K562 (cell line): ENCODE measurements at regions of chr12 and their contacts with region 1.

Region 1: GRCh38 chr12:69290545-69291277 is 51.3 kb downstream of the CPSF6 start:
- DNase-seq: peak; percentile 76 to 91 (median 78)
- ATAC-seq: peak; percentile 100
- H3K4me3 ChIP-seq: no peak overlapping the region
- H3K27ac ChIP-seq: no peak overlapping the region
- H3K4me1 ChIP-seq: no peaks in the 10 kb centered on the region; a peak in 1 of 5 replicates
- H3K27me3 ChIP-seq: no peaks in the 10 kb centered on the region
- CTCF ChIP-seq: peak; percentile 99 to 100 (median 99)
- EP300 ChIP-seq: no peak
- POLR2A ChIP-seq: no peak
- RAD21 ChIP-seq: peak; percentile 98 to 99

Region 2: DNA sequence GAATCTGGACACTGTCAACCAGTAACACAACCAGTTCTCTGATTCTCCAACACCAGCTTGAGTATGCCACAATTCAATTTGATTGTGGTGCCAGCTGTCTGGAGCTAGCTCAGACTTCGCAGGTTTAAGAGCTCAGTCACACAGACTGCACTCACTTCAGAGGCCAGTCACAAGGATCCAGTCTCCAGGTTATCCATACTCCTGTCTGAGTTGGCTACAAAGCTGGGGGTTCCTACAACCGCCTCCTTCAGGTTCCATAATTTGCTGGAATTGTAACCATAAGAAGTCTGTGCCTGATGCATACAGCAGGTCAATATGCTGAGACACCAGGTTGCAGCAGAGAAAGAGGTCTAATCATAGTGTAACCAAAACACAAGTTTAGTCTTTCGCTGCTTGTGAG is 121.9 kb before region 1 on chr12:
- CTCF ChIA-PET with region 1: no interaction called
- POLR2A ChIA-PET with region 1: no interaction called
- in situ Hi-C with region 1: no loop called
- intact Hi-C with region 1: no loop called
- DNase-seq: no peak
- ATAC-seq: no peak
- H3K4me3 ChIP-seq: no peak overlapping the region
- H3K27ac ChIP-seq: no peak overlapping the region
- H3K4me1 ChIP-seq: no peaks in the 10 kb centered on the region; a peak in 1 of 5 replicates
- H3K27me3 ChIP-seq: peaks cover 5% of the 10 kb centered on the region in 2 experiments; a peak in 3 of 5 replicates
- CTCF ChIP-seq: no peak
- EP300 ChIP-seq: no peak
- POLR2A ChIP-seq: no peak
- RAD21 ChIP-seq: no peak

Region 3: GRCh38 chr12:69330475-69331473 is 40.1 kb after region 1 on chr12:
- CTCF ChIA-PET with region 1: no interaction called
- POLR2A ChIA-PET with region 1: no interaction called
- in situ Hi-C with region 1: no loop called
- intact Hi-C with region 1: no loop called
- DNase-seq: peak; percentile 42 to 73 (median 50)
- ATAC-seq: peak; percentile 82
- H3K4me3 ChIP-seq: peak overlapping the region; percentile 30
- H3K27ac ChIP-seq: peak overlapping the region; percentile 52; the same call in 2 of the 3 replicates
- H3K4me1 ChIP-seq: peaks cover 0 to 14% of the 10 kb centered on the region in 2 experiments
- H3K27me3 ChIP-seq: no peaks in the 10 kb centered on the region
- CTCF ChIP-seq: no peak
- EP300 ChIP-seq: no peak; the same call in 1 of the 2 replicates
- POLR2A ChIP-seq: peak; percentile 75
- RAD21 ChIP-seq: no peak

Region 4: DNA sequence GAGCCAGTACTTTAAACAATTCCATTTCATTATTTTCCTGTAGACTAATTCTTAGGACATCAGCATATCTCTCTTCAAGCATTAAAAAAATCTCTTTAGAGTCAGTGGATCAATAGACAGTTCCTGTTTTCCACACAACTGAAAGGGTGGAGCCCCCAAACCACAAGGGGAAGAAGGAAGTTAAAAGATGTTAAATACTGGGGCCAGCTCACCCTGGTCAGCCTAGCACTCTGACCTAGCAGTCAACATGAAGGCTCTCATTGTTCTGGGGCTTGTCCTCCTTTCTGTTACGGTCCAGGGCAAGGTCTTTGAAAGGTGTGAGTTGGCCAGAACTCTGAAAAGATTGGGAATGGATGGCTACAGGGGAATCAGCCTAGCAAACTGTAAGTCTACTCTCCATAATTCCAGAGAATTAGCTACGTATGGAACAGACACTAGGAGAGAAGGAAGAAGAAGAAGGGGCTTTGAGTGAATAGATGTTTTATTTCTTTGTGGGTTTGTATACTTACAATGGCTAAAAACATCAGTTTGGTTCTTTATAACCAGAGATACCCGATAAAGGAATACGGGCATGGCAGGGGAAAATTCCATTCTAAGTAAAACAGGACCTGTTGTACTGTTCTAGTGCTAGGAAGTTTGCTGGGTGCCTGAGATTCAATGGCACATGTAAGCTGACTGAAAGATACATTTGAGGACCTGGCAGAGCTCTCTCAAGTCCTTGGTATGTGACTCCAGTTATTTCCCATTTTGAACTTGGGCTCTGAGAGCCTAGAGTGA is 57.6 kb after region 1 on chr12 and contains the start of gene LYZ:
- CTCF ChIA-PET with region 1: interaction called, 4 read pairs
- POLR2A ChIA-PET with region 1: no interaction called
- in situ Hi-C with region 1: no loop called
- intact Hi-C with region 1: loop called (anchors 2 kb)
- DNase-seq: peak in 2 of 4 experiments; percentile 46 to 63
- ATAC-seq: peak; percentile 90
- H3K4me3 ChIP-seq: peak within 1 kb of the TSS; percentile 20
- H3K27ac ChIP-seq: peak within 1 kb of the TSS; percentile 63
- H3K4me1 ChIP-seq: peaks cover 4 to 10% of the 10 kb centered on the region in 2 experiments; a peak in 4 of 5 replicates
- H3K27me3 ChIP-seq: no peaks in the 10 kb centered on the region
- CTCF ChIP-seq: no peak
- EP300 ChIP-seq: 0 out of 2 replicates have a peak, but pooled peaks have one; percentile 7
- POLR2A ChIP-seq: 0 out of 2 replicates have a peak, but pooled peaks have one; percentile 30
- RAD21 ChIP-seq: no peak
- polyA plus RNA-seq, gene LYZ: 44.0 to 47.0 TPM

Region 5: DNA sequence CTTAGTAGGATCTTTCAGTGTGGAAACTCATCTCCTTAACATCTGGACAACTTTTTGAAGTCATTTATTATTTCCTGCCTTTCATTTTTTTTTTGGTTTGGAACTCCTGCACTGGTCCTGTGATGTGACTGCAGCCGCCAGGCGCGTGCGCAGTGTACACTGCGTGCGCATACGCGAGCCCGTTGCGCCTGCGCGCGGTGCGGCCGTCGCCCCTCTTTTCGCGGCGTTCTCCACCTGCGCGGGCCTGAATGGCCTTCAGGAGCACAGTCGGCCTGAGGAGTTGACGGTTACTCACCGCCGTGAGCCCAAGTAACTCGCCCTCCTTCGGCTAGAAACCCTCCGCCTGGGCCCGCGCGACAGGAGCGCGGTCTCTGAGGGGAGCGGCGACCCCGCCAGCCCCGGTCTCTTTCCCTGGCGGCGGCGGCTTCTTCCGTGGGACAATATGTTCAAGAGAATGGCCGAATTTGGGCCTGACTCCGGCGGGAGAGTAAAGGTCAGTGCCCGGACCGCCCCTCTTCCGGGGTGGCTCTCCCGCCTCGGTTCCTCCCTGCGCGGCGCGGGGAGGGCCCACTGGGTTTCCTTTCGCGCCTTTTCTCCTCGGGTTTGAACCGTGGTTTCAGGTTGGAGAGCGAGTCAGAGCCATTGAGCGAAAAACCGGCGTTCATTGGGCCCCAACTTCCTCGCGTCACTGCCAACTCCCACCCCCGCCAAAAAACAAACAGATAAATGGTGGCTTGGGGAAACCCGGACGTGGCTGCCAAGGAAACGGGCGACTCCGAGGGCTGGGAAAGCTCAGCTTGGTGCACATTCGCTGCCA is 69.0 kb after region 1 on chr12 and contains the start of gene YEATS4:
- CTCF ChIA-PET with region 1: no interaction called
- POLR2A ChIA-PET with region 1: no interaction called
- in situ Hi-C with region 1: no loop called
- intact Hi-C with region 1: loop called (anchors 2 kb)
- DNase-seq: peak; percentile 86 to 95 (median 90)
- ATAC-seq: peak; percentile 94
- H3K4me3 ChIP-seq: peak within 1 kb of the TSS; percentile 52
- H3K27ac ChIP-seq: peak within 1 kb of the TSS; percentile 95
- H3K4me1 ChIP-seq: peaks cover 11 to 14% of the 10 kb centered on the region in 2 experiments; a peak in 4 of 5 replicates
- H3K27me3 ChIP-seq: no peaks in the 10 kb centered on the region
- CTCF ChIP-seq: no peak
- EP300 ChIP-seq: peak; percentile 34; the same call in 1 of the 2 replicates
- POLR2A ChIP-seq: peak; percentile 95
- RAD21 ChIP-seq: no peak
- polyA plus RNA-seq, gene YEATS4: 25.9 to 26.3 TPM